Activated CD4-positive, alpha-beta memory T cell treated with anti-CD3 and anti-CD28 coated beads for 36 hours (primary cell): ENCODE measurements at regions of chr11 and their contacts with region 1.

Region 1: DNA sequence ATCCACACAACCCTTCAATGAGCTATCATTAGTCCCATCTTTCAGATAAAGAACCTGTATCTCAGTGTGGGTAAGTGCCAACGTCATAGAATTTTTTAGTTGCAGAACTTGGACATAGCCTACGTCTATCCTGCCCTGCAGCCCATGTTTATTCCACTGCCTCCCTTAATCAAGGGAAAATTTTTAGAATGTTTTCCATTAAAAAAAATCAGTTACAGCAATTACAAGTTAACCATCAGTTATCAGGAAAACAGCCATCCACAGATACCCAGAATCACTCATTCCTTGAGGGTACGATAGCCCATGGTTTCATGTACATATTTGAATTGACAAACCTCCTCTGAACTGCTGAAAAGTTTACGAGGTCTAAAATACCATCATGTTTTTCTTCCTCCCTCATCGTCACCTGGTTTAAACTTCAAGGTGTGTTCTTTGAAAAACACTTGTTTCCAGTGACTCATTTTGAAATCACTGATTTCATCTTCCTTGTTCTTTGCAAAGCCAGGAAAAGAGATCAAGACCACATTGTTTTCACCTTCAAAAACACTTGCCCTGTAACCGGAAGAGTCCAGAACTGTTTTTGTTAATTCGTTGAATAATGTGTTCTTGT is 100.9 kb downstream of the FAM76B start:
- DNase-seq: no peak
- H3K4me3 Mint-ChIP-seq: no peak overlapping the region
- H3K27ac Mint-ChIP-seq: no peak overlapping the region
- H3K4me1 Mint-ChIP-seq: peaks cover 40% of the 10 kb centered on the region
- H3K27me3 Mint-ChIP-seq: no peaks in the 10 kb centered on the region

Region 2: GRCh38 chr11:95443386-95443785 is 245.3 kb before region 1 on chr11:
- CTCF ChIA-PET with region 1: no interaction called
- POLR2A ChIA-PET with region 1: no interaction called
- intact Hi-C with region 1: loop called (anchors 5 kb)
- DNase-seq: peak; percentile 63
- H3K4me3 Mint-ChIP-seq: no peak overlapping the region
- H3K27ac Mint-ChIP-seq: no peak overlapping the region
- H3K4me1 Mint-ChIP-seq: peaks cover 15% of the 10 kb centered on the region
- H3K27me3 Mint-ChIP-seq: no peaks in the 10 kb centered on the region

Region 3: GRCh38 chr11:95661162-95661561 is 27.5 kb before region 1 on chr11:
- CTCF ChIA-PET with region 1: no interaction called
- POLR2A ChIA-PET with region 1: no interaction called
- intact Hi-C with region 1: no loop called
- DNase-seq: no peak
- H3K4me3 Mint-ChIP-seq: no peak overlapping the region
- H3K27ac Mint-ChIP-seq: no peak overlapping the region
- H3K4me1 Mint-ChIP-seq: peaks cover 21% of the 10 kb centered on the region
- H3K27me3 Mint-ChIP-seq: no peaks in the 10 kb centered on the region

Region 4: DNA sequence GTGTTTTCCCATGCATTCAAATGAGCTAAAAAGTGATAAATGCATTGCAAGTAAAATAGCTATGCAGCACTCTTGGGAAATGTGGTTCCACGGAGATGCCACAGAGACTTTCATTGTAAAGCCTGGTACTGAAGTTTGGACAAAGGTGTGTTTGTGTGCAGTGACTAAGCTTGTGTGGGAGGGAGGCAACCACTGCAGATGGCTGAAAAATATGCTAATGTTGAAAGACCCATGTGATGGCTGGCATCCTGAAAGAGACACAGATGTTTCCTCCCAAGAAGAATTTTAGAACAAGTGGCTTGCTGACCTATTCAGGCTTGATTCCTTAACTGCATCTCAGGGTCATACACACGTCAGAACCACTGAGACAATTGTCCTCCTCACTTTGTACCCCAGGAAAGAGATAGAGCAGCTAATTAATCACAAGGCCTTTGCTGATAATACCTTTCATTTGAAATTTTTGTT is 27.1 kb after region 1 on chr11:
- CTCF ChIA-PET with region 1: no interaction called
- POLR2A ChIA-PET with region 1: no interaction called
- intact Hi-C with region 1: loop called (anchors 1 kb)
- DNase-seq: peak; percentile 71
- H3K4me3 Mint-ChIP-seq: no peak overlapping the region
- H3K27ac Mint-ChIP-seq: peak overlapping the region; percentile 43
- H3K4me1 Mint-ChIP-seq: peaks cover 59% of the 10 kb centered on the region
- H3K27me3 Mint-ChIP-seq: no peaks in the 10 kb centered on the region

Region 5: DNA sequence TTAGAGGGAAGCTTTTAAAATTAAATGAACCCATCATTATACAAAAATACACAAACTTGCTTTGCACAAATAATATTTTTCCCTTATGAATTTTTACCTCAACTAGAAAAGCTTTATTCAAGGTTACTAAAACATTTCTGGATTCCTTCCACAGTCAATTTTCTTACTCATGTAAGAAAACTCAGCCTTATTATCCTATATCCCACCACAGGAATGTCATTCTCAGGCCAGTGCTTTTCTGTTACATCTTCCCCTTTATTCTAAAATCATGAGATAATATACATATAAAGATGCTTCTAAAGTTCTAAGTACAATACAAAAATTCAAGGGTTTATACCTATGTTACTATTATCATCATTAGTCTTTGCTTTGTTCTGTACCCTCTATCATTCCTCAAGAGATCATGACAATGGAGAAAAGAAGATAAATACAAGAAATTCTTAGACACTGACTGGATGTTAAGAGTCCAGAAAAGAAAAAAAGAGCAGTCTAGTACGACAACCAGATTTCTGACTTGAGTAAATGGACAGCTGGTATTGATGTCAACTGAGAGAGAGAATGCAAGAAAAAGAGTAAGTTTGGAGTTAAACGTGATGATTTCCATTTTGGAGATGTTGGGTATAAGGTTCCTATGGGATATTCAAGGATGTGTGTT is 174.9 kb after region 1 on chr11:
- CTCF ChIA-PET with region 1: no interaction called
- POLR2A ChIA-PET with region 1: no interaction called
- intact Hi-C with region 1: no loop called
- DNase-seq: no peak
- H3K4me3 Mint-ChIP-seq: no peak overlapping the region
- H3K27ac Mint-ChIP-seq: no peak overlapping the region
- H3K4me1 Mint-ChIP-seq: no peaks in the 10 kb centered on the region
- H3K27me3 Mint-ChIP-seq: no peaks in the 10 kb centered on the region